Activated B cell treated with CpG ODN at 0.5 μM for 24 hours (primary cell): ENCODE measurements at regions of chr7 and their contacts with region 1.

Region 1: GRCh38 chr7:2838873-2839578 is 5.1 kb downstream of the GNA12 start:
- DNase-seq: no peak
- ATAC-seq: peak; percentile 91
- H3K4me3 Mint-ChIP-seq: peak overlapping the region; percentile 44
- H3K27ac Mint-ChIP-seq: peak overlapping the region; percentile 91
- H3K4me1 Mint-ChIP-seq: peaks cover 79% of the 10 kb centered on the region
- H3K27me3 Mint-ChIP-seq: no peaks in the 10 kb centered on the region
- CTCF ChIP-seq: no peak

Region 2: GRCh38 chr7:2821161-2821841 is 17.7 kb before region 1 on chr7:
- CTCF ChIA-PET with region 1: interaction called, 3 read pairs
- POLR2A ChIA-PET with region 1: interaction called, 6 read pairs
- intact Hi-C with region 1: loop called (anchors 1 kb)
- DNase-seq: no peak
- ATAC-seq: peak; percentile 67
- H3K4me3 Mint-ChIP-seq: peak overlapping the region; percentile 74
- H3K27ac Mint-ChIP-seq: peak overlapping the region; percentile 85
- H3K4me1 Mint-ChIP-seq: peaks cover 67% of the 10 kb centered on the region
- H3K27me3 Mint-ChIP-seq: no peaks in the 10 kb centered on the region
- CTCF ChIP-seq: no peak